GM12878 (cell line): ENCODE measurements at regions of chr3 and their contacts with region 1.

Region 1: GRCh38 chr3:105366326-105367062 is at the start of gene ALCAM:
- DNase-seq: peak; percentile 77
- ATAC-seq: peak; percentile 66
- H3K4me3 ChIP-seq: peak within 1 kb of the TSS; percentile 88
- H3K27ac ChIP-seq: peak within 1 kb of the TSS; percentile 99
- H3K4me1 ChIP-seq: peaks cover 2% of the 10 kb centered on the region; the same call in 1 of the 2 replicates
- H3K27me3 ChIP-seq: no peaks in the 10 kb centered on the region
- CTCF ChIP-seq: peak; percentile 46 to 74 (median 52); a peak in 5 of 6 replicates
- EP300 ChIP-seq: no peak
- POLR2A ChIP-seq: peak; percentile 82
- RAD21 ChIP-seq: peak; percentile 86
- polyA plus RNA-seq, gene ALCAM: 12.2 to 16.2 TPM

Region 2: DNA sequence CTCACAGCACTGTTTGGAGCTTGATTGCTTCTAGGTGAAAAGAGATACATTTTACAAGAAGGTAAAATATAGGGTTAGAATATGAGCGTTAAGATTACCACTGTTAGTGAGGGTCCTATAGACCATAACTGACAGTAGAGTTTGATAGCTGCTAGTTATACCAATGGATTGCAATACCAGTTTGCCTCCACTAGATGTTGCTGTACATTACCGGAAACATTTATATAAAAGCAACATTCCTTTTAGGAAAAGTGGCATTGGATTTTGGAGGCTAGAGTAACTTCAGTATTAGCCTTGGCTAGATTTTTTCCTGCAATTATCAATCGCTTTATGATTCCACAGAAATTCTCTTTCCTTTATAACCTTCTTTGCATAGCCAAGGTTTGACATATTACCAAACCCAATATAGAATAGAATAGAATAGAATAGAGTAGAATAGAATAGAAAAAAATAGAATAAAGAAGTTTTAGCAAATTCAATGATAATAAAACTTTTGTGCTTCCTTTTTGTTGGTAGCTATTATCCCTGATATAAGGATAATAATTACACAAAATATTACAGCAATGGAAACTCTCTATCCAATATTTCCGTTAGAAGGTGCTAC is 1093.3 kb before region 1 on chr3:
- CTCF ChIA-PET with region 1: interaction called, 3 read pairs
- POLR2A ChIA-PET with region 1: no interaction called
- RAD21 ChIA-PET with region 1: interaction called, 5 read pairs
- SMC1A ChIA-PET with region 1: interaction called, 5 read pairs
- in situ Hi-C with region 1: loop called (anchors 5 kb)
- intact Hi-C with region 1: loop called (anchors 1 kb)
- DNase-seq: no peak
- ATAC-seq: peak; percentile 58
- H3K4me3 ChIP-seq: no peak overlapping the region
- H3K27ac ChIP-seq: no peak overlapping the region
- H3K4me1 ChIP-seq: no peaks in the 10 kb centered on the region
- H3K27me3 ChIP-seq: no peaks in the 10 kb centered on the region
- CTCF ChIP-seq: peak; percentile 75 to 80 (median 77)
- EP300 ChIP-seq: no peak
- POLR2A ChIP-seq: no peak
- RAD21 ChIP-seq: peak; percentile 91

Region 3: GRCh38 chr3:104521606-104522336 is 844.7 kb before region 1 on chr3:
- CTCF ChIA-PET with region 1: interaction called, 4 read pairs
- POLR2A ChIA-PET with region 1: no interaction called
- RAD21 ChIA-PET with region 1: interaction called, 4 read pairs
- SMC1A ChIA-PET with region 1: interaction called, 6 read pairs
- in situ Hi-C with region 1: loop called (anchors 5 kb)
- intact Hi-C with region 1: loop called (anchors 2 kb)
- DNase-seq: peak; percentile 68
- ATAC-seq: peak; percentile 66
- H3K4me3 ChIP-seq: peak overlapping the region; percentile 71
- H3K27ac ChIP-seq: peak overlapping the region; percentile 91
- H3K4me1 ChIP-seq: peaks cover 23% of the 10 kb centered on the region
- H3K27me3 ChIP-seq: no peaks in the 10 kb centered on the region
- CTCF ChIP-seq: no peak
- EP300 ChIP-seq: peak in 1 of 2 experiments; percentile 78; a peak in 2 of 4 replicates
- POLR2A ChIP-seq: no peak
- RAD21 ChIP-seq: 0 out of 2 replicates have a peak, but pooled peaks have one; percentile 1

Region 4: DNA sequence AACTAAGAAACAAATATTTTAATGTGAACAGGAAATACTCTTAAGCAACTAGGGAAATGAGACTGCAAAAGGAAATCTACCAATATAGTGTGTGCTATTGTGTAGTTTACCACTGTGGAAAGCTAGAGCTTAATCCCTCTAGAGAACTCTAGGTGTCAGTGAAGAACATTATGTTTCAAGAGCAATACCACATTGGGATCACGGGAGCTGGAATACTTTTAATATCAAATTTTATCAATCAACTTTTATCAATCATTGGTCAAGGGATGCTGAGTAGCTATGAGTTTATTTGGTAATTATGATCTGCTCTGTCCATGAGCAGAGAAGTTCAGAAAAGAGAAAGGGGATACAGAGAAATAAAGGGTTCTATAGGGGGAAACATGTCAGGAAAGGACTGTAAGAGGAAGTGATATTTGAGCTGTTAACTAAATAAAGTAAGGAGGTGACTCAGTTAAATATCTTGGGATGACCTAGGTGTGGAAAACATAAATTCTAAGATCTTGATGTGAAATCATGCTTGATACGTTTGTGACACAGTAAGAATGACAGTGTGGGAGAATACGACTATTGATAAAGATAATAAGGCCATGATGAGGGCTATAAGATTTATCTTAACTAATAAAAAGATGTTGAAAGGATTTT is 762.0 kb before region 1 on chr3:
- CTCF ChIA-PET with region 1: no interaction called
- POLR2A ChIA-PET with region 1: no interaction called
- RAD21 ChIA-PET with region 1: interaction called, 4 read pairs
- SMC1A ChIA-PET with region 1: no interaction called
- in situ Hi-C with region 1: loop called (anchors 10 kb)
- intact Hi-C with region 1: no loop called
- DNase-seq: no peak
- ATAC-seq: peak; percentile 46; the same call in 1 of the 3 replicates
- H3K4me3 ChIP-seq: no peak overlapping the region
- H3K27ac ChIP-seq: no peak overlapping the region
- H3K4me1 ChIP-seq: no peaks in the 10 kb centered on the region
- H3K27me3 ChIP-seq: no peaks in the 10 kb centered on the region
- CTCF ChIP-seq: no peak
- EP300 ChIP-seq: no peak
- POLR2A ChIP-seq: no peak
- RAD21 ChIP-seq: no peak

Region 5: GRCh38 chr3:104886220-104886995 is 480.1 kb before region 1 on chr3:
- CTCF ChIA-PET with region 1: no interaction called
- POLR2A ChIA-PET with region 1: no interaction called
- RAD21 ChIA-PET with region 1: no interaction called
- SMC1A ChIA-PET with region 1: no interaction called
- in situ Hi-C with region 1: no loop called
- intact Hi-C with region 1: loop called (anchors 5 kb)
- DNase-seq: no peak
- ATAC-seq: no peak; the same call in 1 of the 3 replicates
- H3K4me3 ChIP-seq: no peak overlapping the region
- H3K27ac ChIP-seq: no peak overlapping the region
- H3K4me1 ChIP-seq: no peaks in the 10 kb centered on the region
- H3K27me3 ChIP-seq: no peaks in the 10 kb centered on the region
- CTCF ChIP-seq: no peak
- EP300 ChIP-seq: no peak
- POLR2A ChIP-seq: no peak
- RAD21 ChIP-seq: no peak

Region 6: DNA sequence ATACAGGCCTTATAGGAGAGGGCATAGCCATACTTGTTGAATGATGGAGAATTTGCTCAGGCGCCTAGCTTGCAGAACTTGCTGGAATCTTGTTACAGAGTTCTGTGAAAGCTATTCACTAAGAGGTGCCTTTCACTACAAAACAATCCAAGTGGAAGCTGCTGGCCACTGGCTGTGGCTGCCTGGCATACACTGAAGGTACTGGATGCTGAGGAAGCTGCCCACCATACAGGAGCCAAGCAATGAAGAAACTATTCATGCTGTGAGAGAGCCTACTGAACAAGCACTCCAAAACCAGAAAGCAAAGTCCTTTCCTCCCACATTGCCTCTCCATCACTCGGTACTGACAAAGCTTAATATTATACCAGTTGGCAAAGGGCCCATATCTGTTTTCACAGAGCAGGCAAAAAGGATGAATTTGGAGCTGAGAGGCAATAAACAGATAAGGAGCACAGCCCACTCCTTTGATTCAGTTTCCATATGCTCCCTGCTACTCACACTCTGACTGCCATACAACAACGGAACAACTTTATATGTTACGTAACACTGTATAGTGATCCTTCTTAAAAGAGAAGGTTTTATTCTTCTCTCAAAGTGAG is 192.4 kb before region 1 on chr3:
- CTCF ChIA-PET with region 1: no interaction called
- POLR2A ChIA-PET with region 1: no interaction called
- RAD21 ChIA-PET with region 1: no interaction called
- SMC1A ChIA-PET with region 1: no interaction called
- in situ Hi-C with region 1: no loop called
- intact Hi-C with region 1: no loop called
- DNase-seq: no peak
- ATAC-seq: no peak
- H3K4me3 ChIP-seq: no peak overlapping the region
- H3K27ac ChIP-seq: no peak overlapping the region
- H3K4me1 ChIP-seq: no peaks in the 10 kb centered on the region
- H3K27me3 ChIP-seq: no peaks in the 10 kb centered on the region
- CTCF ChIP-seq: no peak
- EP300 ChIP-seq: no peak
- POLR2A ChIP-seq: no peak
- RAD21 ChIP-seq: no peak

Region 7: GRCh38 chr3:105505170-105505569 is 138.7 kb after region 1 on chr3:
- CTCF ChIA-PET with region 1: interaction called, 6 read pairs
- POLR2A ChIA-PET with region 1: interaction called, 10 read pairs
- RAD21 ChIA-PET with region 1: interaction called, 4 read pairs
- SMC1A ChIA-PET with region 1: interaction called, 6 read pairs
- in situ Hi-C with region 1: no loop called
- intact Hi-C with region 1: no loop called
- DNase-seq: no peak
- ATAC-seq: no peak
- H3K4me3 ChIP-seq: no peak overlapping the region
- H3K27ac ChIP-seq: no peak overlapping the region
- H3K4me1 ChIP-seq: no peaks in the 10 kb centered on the region
- H3K27me3 ChIP-seq: no peaks in the 10 kb centered on the region
- CTCF ChIP-seq: no peak
- EP300 ChIP-seq: no peak
- POLR2A ChIP-seq: no peak
- RAD21 ChIP-seq: no peak

Region 8: DNA sequence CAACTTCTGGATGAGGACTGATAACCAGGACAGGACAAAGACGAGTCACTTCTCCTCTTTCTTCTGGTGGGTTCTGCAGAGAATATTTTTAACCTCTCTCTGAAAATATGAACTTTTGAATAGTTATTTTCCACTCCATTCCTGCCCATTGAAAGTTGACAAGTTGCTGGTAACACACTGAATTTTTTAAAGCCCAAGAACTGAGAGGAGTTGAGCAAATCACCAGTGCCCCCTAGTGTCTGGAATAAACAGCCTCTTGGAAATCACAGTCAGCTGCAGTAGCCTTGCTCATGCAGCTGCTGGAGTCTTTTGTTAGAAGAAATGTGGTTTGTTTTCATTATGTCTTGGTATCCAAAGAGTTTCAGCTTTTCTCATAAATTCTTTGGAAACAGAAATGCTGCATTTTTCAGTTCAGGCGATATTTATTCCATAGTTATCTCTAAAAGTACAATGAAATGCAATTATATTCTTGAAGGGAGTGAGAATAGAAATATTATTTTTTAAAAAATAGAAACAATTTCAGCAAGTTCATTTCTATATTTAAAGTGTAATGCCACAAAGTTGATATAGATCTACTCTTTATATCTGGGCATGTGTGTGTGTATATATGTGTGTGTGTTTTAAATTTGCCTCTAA is 1243.3 kb after region 1 on chr3:
- CTCF ChIA-PET with region 1: no interaction called
- POLR2A ChIA-PET with region 1: no interaction called
- RAD21 ChIA-PET with region 1: interaction called, 4 read pairs
- SMC1A ChIA-PET with region 1: interaction called, 3 read pairs
- in situ Hi-C with region 1: no loop called
- intact Hi-C with region 1: loop called (anchors 10 kb)
- DNase-seq: peak; percentile 77
- ATAC-seq: peak; percentile 95
- H3K4me3 ChIP-seq: no peak overlapping the region
- H3K27ac ChIP-seq: peak overlapping the region; percentile 55
- H3K4me1 ChIP-seq: peaks cover 5% of the 10 kb centered on the region
- H3K27me3 ChIP-seq: no peaks in the 10 kb centered on the region
- CTCF ChIP-seq: peak; percentile 83 to 87 (median 86)
- EP300 ChIP-seq: no peak
- POLR2A ChIP-seq: no peak
- RAD21 ChIP-seq: peak; percentile 99